Activated naive CD4-positive, alpha-beta T cell treated with anti-CD3 and anti-CD28 coated beads, Interleukin-2, amount 10 ng/mL, durations not matched to agents 7 days and 5 days (primary cell): ENCODE measurements at regions of chr16 and their contacts with region 1.

Region 1: GRCh38 chr16:47141773-47142485 is 1.8 kb downstream of the NETO2 start:
- DNase-seq: peak; percentile 90
- H3K4me3 Mint-ChIP-seq: peak overlapping the region; percentile 70
- H3K27ac Mint-ChIP-seq: no peak overlapping the region
- H3K4me1 Mint-ChIP-seq: peaks cover 28% of the 10 kb centered on the region
- H3K27me3 Mint-ChIP-seq: peaks cover 33% of the 10 kb centered on the region

Region 2: DNA sequence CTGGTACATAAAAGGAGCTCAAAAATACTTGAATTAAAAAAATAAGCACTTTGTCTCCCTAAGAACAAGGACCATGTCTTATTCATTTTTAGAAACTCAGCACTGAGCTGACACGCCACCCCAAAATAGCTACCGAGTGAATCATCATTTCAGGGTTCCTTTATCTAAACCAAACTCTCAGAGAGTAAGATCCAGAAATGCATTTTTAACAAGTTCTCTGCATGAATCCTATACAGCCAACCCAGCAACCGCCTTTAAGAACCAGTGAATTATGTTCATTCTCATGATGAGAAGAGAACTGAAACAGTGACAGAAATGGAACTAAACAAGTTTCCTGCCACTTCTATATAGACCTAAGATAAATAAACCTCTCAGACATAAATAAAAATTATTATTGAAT is 319.7 kb before region 1 on chr16:
- CTCF ChIA-PET with region 1: no interaction called
- DNase-seq: no peak
- H3K4me3 Mint-ChIP-seq: no peak overlapping the region
- H3K27ac Mint-ChIP-seq: no peak overlapping the region
- H3K4me1 Mint-ChIP-seq: peaks cover 16% of the 10 kb centered on the region
- H3K27me3 Mint-ChIP-seq: no peaks in the 10 kb centered on the region

Region 3: DNA sequence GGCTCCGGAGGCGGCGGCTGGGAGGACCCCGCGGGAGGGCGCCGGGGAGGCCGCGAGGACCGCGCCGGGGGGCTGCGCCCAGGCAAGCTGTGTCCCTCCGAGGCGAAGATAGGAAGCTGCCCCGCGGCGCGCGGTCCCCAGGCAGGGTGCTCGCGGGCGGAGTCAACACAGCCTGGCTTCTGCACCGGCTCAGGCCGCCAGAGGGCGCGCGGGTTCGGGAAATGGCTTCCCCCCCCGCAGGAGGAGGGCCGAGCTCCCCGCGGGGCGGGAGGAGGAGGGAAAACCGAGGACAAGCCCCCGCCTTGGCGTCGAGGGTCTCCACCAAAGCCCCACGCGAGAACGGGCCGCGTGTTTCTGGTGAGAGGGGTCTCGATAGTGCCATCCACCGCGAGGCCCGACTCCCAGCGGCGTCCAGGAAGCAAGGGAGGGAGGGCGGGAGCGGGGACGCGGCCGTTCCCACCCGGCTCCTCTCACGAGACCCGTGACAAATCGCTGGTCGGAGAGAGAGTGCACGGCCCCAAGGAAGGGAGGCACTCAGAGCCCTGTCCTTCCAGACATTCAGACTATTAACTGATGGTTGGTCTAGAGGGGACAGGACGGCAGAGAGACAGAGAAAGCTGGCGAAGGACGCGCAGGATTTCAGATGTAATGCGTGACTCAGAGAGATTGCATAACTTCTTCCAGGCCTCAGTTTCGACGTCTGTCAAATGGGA is 104.0 kb before region 1 on chr16:
- CTCF ChIA-PET with region 1: interaction called, 34 read pairs
- DNase-seq: peak; percentile 92
- H3K4me3 Mint-ChIP-seq: peak overlapping the region; percentile 69
- H3K27ac Mint-ChIP-seq: no peak overlapping the region
- H3K4me1 Mint-ChIP-seq: peaks cover 5% of the 10 kb centered on the region
- H3K27me3 Mint-ChIP-seq: peaks cover 42% of the 10 kb centered on the region

Region 4: DNA sequence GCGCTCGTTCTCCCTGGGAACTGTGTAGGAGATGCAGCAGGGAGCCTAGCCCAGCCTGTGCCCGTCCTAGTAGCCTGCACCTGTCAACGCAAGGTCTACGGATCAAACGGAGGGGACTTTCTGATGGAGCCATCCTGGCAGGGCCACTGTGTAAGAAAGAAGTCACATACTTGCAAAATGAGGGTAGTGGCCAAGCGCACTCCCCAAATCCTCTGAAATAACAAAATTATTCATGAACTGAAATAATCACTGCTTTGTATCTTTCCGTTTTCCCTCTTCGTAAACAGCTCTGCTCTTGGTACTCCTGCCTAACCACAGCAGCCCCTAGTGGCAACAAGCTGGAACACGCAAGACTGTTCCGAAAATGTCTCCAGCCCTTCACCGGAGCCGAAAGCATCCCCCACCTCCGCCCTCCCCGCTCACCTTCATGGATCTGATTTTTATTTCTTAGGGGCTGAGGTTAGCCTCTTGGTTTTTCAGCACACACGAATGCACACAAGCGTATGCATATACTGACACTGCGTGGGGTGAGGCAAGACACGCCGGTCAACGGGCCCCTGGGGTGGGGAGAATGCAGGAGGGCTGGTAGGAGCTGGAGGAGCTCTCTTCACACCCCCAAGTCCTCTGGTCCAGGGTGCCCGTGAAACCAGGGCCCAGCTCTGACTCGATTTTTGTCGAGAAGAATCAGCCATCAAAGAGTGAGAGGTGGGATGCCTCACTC is 913.1 kb after region 1 on chr16:
- CTCF ChIA-PET with region 1: interaction called, 41 read pairs
- DNase-seq: peak; percentile 57
- H3K4me3 Mint-ChIP-seq: no peak overlapping the region
- H3K27ac Mint-ChIP-seq: no peak overlapping the region
- H3K4me1 Mint-ChIP-seq: peaks cover 5% of the 10 kb centered on the region
- H3K27me3 Mint-ChIP-seq: peaks cover 22% of the 10 kb centered on the region

Region 5: DNA sequence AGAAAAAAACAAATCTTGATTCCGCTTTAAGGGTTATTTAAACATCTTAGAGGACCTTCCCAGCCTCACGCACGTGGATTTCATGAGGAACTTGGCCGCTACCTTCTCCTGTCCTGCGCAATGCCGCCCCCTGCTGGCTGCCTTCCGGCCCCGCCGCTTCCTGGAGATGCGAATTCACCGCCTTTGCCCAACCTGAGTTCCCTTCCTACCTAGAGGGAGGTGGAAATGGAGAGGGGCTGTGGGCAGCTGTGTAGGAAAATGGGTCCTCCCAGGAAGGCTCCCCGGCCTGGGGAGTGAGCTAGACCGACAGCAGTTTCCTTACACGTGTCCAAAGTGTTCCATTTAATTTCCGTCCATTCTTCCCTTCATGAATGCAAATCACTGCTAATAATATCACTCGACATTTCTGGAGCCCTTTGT is 1014.9 kb after region 1 on chr16:
- CTCF ChIA-PET with region 1: interaction called, 22 read pairs
- DNase-seq: peak; percentile 87
- H3K4me3 Mint-ChIP-seq: no peak overlapping the region
- H3K27ac Mint-ChIP-seq: no peak overlapping the region
- H3K4me1 Mint-ChIP-seq: peaks cover 8% of the 10 kb centered on the region
- H3K27me3 Mint-ChIP-seq: peaks cover 33% of the 10 kb centered on the region

Region 6: DNA sequence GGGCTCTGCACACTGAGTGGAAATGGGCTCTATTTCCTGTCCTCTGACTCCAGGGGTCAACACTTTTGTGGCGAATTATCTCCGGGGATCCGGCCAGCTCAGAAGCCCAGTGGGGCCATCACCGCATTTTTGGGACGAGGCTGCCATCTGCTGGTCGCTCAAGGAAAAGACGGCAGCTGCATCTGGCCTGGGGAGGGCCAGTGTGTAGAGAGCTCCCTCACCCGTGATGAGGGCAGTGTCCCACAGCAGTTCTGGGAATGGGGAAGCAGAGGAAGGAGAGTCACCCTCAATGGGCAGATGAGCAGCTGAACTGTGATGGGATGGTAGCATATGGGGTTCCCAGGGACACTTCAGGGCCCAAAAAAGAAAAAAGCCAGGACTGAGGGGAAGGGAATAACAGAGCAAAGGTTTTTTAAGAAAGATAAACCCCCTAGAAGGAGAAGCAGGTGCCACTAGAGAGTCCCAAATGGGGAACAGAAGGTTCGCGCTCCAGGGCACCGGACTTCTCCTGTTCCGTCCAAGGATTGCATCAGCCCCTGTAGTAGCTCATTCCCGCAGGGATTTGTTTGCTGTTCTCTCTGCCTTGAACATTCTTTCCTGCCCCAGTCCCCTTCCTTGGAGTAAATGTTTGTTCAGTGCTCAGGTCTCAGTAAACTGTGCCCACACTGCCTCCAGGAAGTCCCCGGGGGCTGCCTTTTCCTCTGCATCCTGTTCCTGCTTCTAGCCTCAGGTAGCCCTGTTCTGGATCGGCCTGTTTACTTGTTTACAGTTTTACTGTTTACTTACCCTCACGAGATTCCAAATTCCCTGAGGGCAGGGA is 1023.2 kb after region 1 on chr16:
- CTCF ChIA-PET with region 1: interaction called, 14 read pairs
- DNase-seq: peak; percentile 74
- H3K4me3 Mint-ChIP-seq: no peak overlapping the region
- H3K27ac Mint-ChIP-seq: no peak overlapping the region
- H3K4me1 Mint-ChIP-seq: peaks cover 7% of the 10 kb centered on the region
- H3K27me3 Mint-ChIP-seq: peaks cover 14% of the 10 kb centered on the region